Gastrocnemius medialis (tissue), 4 donors: ENCODE measurements at regions of chr16 and their contacts with region 1.

Region 1: GRCh38 chr16:57084257-57084770 is 8.1 kb upstream of the CPNE2 start:
- DNase-seq: peak; percentile 32 to 57
- ATAC-seq: peak; percentile 72 to 84
- H3K4me3 ChIP-seq: no peak overlapping the region
- H3K27ac ChIP-seq: no peak overlapping the region
- H3K4me1 ChIP-seq: no peaks in the 10 kb centered on the region
- H3K27me3 ChIP-seq: no peaks in the 10 kb centered on the region
- CTCF ChIP-seq: peak; percentile 82 to 95 (median 92)
- POLR2A ChIP-seq: no peak

Region 2: GRCh38 chr16:57167953-57168352 is 83.6 kb after region 1 on chr16:
- in situ Hi-C with region 1: loop called in 3 of 4 experiments (anchors 5 to 10 kb)
- intact Hi-C with region 1: loop called (anchors 5 kb)
- DNase-seq: no peak
- ATAC-seq: peak in 1 of 2 donors; percentile 58
- H3K4me3 ChIP-seq: no peak overlapping the region
- H3K27ac ChIP-seq: no peak overlapping the region
- H3K4me1 ChIP-seq: no peaks in the 10 kb centered on the region
- H3K27me3 ChIP-seq: no peaks in the 10 kb centered on the region
- CTCF ChIP-seq: peak in 4 of 5 experiments; percentile 11 to 51 (median 38)
- POLR2A ChIP-seq: no peak

Region 3: DNA sequence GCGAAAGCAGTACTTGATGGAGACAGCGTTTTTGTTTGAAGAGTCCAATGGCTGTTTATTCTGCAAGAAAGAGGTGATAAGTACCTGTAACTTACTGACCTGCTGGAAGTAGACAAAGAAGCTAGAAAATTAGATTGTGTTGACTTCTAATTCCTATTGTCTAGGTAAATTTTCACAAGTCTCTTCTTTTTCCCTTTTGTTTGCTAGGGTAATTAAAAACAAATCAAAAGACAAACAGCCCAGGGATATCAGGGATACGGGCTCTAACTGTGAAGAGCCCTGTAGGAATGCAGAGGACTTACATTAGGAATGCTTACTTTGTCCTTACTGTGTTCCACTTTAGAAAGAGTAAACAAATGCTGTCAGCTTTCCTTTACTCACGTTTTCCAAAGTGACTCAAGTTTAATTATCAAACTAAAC is 94.5 kb after region 1 on chr16:
- in situ Hi-C with region 1: loop called in 1 of 4 experiments (anchors 10 kb)
- intact Hi-C with region 1: no loop called
- DNase-seq: no peak
- ATAC-seq: no peak
- H3K4me3 ChIP-seq: no peak overlapping the region
- H3K27ac ChIP-seq: no peak overlapping the region
- H3K4me1 ChIP-seq: peaks cover 4 to 14% of the 10 kb centered on the region in 2 donors
- H3K27me3 ChIP-seq: no peaks in the 10 kb centered on the region
- CTCF ChIP-seq: no peak
- POLR2A ChIP-seq: no peak

Region 4: DNA sequence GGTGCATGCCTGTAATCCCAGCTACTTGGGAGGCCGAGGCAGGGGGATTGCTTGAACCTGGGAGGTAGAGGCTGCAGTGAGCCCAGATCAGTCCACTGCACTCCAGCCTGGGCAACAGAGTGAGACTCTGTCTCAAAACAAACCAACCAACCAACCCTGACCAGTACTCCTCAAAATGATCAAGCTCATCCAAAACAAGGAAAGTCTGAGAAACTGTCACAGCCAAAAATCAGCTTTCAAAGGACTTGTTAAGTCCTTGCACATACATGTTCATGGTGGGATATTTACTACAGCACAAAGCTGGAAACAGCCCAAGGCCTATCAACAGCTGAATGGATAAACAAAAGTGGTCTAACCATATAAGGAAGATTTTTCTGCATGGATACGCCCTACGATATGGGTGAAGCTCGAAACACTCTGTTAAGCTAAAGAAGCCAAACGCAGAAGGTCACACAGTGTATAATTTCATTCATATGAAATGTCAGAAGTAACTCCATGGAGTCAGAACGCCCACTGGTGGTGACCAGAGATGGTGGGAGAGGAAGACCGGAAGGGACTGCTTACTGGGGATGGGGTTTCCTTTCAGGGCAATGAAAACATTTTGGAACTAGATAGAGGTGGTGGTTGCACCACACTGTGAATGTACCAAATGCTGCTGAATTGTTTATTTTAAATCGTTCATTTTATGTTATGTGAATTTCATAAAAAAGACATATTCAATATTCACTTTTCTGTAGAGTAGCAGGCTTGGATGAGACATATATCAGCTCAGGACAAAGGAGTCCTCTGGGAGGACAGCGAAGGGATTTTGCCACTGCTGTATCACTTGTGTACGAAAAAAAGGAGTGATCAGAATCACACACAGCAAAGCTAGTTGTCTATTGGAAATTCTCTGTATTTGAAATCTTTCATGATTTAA is 338.0 kb after region 1 on chr16:
- in situ Hi-C with region 1: loop called in 1 of 4 experiments (anchors 25 kb)
- intact Hi-C with region 1: no loop called
- DNase-seq: no peak
- ATAC-seq: peak; percentile 17 to 42
- H3K4me3 ChIP-seq: no peak overlapping the region
- H3K27ac ChIP-seq: no peak overlapping the region
- H3K4me1 ChIP-seq: peaks cover 6 to 10% of the 10 kb centered on the region in 2 donors
- H3K27me3 ChIP-seq: no peaks in the 10 kb centered on the region
- CTCF ChIP-seq: peak in 2 of 5 experiments; percentile 41 to 47
- POLR2A ChIP-seq: no peak

Region 5: GRCh38 chr16:58377932-58378331 is 1293.6 kb after region 1 on chr16:
- in situ Hi-C with region 1: no loop called
- intact Hi-C with region 1: no loop called
- DNase-seq: no peak
- ATAC-seq: no peak
- H3K4me3 ChIP-seq: no peak overlapping the region
- H3K27ac ChIP-seq: no peak overlapping the region
- H3K4me1 ChIP-seq: no peaks in the 10 kb centered on the region
- H3K27me3 ChIP-seq: no peaks in the 10 kb centered on the region
- CTCF ChIP-seq: no peak
- POLR2A ChIP-seq: no peak